A673 (cell line): ENCODE measurements at regions of chr18 and their contacts with region 1.

Region 1: DNA sequence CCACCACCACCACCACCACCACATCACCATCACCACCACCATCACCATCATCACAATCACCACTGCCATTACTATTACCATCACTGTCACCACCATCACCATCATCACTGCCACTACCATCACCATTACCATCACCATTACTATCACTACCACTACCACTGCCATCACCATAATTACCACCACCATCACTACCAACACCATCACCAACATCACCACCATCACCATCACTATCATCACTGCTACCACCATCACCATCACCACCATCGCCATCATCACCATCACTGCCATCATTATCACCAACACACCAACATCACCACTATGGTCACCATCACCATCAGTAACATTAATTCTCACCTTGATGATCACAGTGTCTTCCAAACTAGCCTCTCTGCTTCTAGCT is 291.4 kb downstream of the TGIF1 start:
- DNase-seq: no peak
- H3K4me3 ChIP-seq: no peak overlapping the region
- H3K27ac ChIP-seq: peak overlapping the region; percentile 98
- H3K4me1 ChIP-seq: peaks cover 11% of the 10 kb centered on the region
- H3K27me3 ChIP-seq: no peaks in the 10 kb centered on the region
- CTCF ChIP-seq: no peak

Region 2: DNA sequence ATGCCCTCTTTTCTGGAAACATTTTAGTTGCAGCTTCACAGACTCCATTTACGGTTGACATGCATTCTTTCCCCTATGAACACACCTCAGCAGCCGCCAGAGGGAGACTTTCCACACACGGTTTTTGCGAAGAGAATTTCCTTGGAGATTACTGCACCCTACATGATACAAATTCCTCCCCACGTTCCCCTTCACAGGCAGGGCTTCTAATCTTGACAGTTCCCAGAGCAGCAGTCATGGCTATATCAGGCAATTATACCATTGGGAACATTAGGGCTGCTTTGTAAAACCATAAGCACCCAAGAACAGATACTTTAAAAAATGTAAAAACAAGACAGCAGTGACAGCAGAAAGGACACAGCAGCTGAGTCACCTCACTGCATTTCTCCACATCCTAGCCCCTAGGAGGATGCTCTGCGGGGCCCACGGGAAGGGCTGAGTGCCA is 37.6 kb before region 1 on chr18:
- CTCF ChIA-PET with region 1: no interaction called
- POLR2A ChIA-PET with region 1: no interaction called
- intact Hi-C with region 1: loop called (anchors 2 kb)
- DNase-seq: peak; percentile 92
- H3K4me3 ChIP-seq: no peak overlapping the region
- H3K27ac ChIP-seq: peak overlapping the region; percentile 69
- H3K4me1 ChIP-seq: peaks cover 32% of the 10 kb centered on the region
- H3K27me3 ChIP-seq: no peaks in the 10 kb centered on the region
- CTCF ChIP-seq: peak; percentile 83

Region 3: DNA sequence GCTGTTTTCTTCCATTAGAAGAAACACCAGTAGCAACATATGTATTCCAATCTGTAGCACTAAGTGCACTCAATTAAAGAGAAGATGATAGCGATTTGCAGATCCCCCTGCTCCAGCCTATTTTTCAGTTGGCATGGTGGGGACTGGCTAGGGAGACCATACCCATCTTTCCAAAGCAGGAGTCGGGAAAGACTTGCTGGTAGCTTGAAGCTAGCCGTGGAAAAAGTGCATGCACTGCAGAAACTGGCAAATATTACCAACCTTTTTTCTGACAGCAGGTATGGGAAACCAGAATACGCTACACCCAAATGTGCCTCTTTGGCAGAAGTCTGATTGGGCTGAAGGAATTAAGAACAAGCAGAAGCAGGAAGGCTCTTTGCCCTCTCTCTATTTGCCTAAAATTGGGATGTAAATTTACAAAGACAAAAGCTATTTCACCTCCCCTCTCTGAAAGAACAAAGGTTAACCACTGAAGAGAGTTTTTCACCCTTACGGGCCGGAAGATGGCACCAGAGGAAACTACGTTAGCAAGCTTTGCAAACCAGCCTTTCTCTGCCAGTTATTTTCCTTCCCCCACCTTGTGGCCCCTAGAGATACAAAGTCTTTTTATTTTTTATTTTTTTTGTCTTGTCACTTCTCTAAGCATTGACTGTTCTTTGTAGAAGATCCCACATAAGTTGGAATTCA is 440.7 kb after region 1 on chr18:
- CTCF ChIA-PET with region 1: no interaction called
- POLR2A ChIA-PET with region 1: no interaction called
- intact Hi-C with region 1: no loop called
- DNase-seq: no peak
- H3K4me3 ChIP-seq: no peak overlapping the region
- H3K27ac ChIP-seq: no peak overlapping the region
- H3K4me1 ChIP-seq: no peaks in the 10 kb centered on the region
- H3K27me3 ChIP-seq: no peaks in the 10 kb centered on the region
- CTCF ChIP-seq: 0 out of 2 replicates have a peak, but pooled peaks have one; percentile 20